A673 (cell line): ENCODE measurements at regions of chr1 and their contacts with region 1.

Region 1: GRCh38 chr1:21255278-21255942 is 34.9 kb downstream of the ECE1 start:
- DNase-seq: peak; percentile 90
- H3K4me3 ChIP-seq: no peak overlapping the region
- H3K27ac ChIP-seq: no peak overlapping the region
- H3K4me1 ChIP-seq: peaks cover 7% of the 10 kb centered on the region
- H3K27me3 ChIP-seq: no peaks in the 10 kb centered on the region
- CTCF ChIP-seq: peak; percentile 90

Region 2: DNA sequence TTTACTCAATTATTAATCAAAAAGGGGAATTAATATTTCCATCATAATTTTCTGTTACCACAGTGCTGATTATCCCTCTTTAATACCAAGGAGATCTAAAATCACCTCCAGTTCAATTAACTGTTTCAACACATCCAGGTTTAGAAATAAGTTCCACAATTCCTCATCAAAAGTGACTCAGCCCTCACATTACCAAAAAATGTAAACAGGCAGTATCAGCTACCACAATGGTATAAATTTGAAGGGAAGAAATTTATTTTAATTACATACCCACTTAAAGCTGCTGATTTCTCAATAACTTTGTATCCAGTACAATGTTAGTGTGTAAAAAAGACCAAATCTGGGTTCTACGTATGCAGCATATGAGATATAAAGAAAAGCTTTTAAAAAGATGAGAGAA is 130.6 kb before region 1 on chr1:
- CTCF ChIA-PET with region 1: no interaction called
- POLR2A ChIA-PET with region 1: no interaction called
- intact Hi-C with region 1: no loop called
- DNase-seq: no peak
- H3K4me3 ChIP-seq: no peak overlapping the region
- H3K27ac ChIP-seq: no peak overlapping the region
- H3K4me1 ChIP-seq: no peaks in the 10 kb centered on the region
- H3K27me3 ChIP-seq: no peaks in the 10 kb centered on the region
- CTCF ChIP-seq: no peak

Region 3: DNA sequence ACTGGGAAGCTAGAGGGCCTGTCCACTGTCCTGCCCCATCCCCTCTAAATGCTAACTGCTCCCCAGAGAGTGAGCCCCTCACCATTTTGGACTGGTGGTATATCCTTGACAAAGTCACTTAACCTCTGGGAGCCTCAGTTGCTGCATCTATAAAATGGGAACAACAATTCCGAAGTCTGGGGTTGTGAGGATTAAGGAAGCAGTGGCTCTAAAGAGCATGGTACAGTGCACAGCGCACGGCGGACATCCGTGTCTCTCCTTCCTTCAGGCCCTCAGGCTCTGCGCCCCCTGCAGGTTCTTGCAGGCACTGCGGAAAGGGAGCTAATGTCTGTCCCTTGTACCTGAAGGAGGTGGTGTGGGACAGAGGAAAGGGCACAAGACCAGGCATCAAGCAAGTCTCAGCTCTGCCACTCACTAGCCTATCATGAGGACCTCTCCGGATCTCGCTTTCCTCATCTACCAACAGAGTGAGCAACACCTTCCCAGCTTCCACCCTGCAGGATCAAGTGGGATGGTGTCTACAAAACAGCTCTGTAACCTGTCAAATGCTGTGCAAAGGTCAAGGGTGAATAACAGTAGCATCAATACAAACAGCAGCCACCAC is 14.8 kb after region 1 on chr1:
- CTCF ChIA-PET with region 1: interaction called, 22 read pairs
- POLR2A ChIA-PET with region 1: no interaction called
- intact Hi-C with region 1: no loop called
- DNase-seq: peak; percentile 75
- H3K4me3 ChIP-seq: no peak overlapping the region
- H3K27ac ChIP-seq: no peak overlapping the region
- H3K4me1 ChIP-seq: no peaks in the 10 kb centered on the region
- H3K27me3 ChIP-seq: no peaks in the 10 kb centered on the region
- CTCF ChIP-seq: peak; percentile 98

Region 4: DNA sequence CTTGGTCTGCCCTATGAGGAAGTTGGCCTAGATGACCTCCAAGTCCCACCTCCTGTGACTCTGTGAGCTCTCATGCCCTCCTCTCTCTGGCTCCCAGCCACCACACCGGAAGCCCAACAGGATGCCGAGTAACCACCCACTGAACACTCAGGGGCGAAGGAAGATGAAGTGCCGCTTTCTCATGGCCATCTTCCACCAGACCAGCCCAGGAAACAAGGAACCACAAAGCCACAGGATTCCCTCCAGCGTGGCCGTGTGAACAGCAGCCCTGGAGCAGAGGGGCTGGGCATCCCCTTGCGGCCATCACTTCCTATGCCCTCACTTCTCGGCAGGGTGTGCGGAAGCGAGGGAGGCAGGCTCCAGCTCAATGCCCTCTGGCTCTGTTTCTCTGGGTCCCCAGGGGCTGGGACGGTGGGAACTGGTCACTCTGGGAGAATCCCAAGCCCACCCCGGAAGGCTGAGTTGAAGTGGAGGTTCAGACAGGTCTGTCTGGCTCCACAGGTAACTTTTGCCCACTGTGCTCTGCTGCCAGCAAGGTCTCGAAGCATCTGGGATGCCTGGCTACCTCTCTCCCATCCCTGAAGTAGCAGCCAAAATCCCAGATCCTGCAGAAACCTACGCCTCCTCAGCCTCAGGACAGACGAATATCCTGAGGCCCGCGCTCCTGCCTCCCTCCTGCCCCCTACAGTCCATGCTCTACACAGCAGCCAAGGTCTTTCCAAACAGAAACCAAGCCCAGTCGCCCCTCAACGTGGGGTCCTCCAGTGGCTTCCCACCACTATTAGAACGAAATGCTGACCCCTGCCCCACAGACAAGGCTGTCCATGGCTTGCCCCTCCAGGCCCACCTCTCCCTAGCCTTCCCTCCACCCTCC is 79.0 kb after region 1 on chr1:
- CTCF ChIA-PET with region 1: interaction called, 11 read pairs
- POLR2A ChIA-PET with region 1: no interaction called
- intact Hi-C with region 1: loop called (anchors 1 kb)
- DNase-seq: peak; percentile 78
- H3K4me3 ChIP-seq: peak overlapping the region; percentile 50
- H3K27ac ChIP-seq: peak overlapping the region; percentile 70
- H3K4me1 ChIP-seq: peaks cover 35% of the 10 kb centered on the region
- H3K27me3 ChIP-seq: no peaks in the 10 kb centered on the region
- CTCF ChIP-seq: peak; percentile 87

Region 5: DNA sequence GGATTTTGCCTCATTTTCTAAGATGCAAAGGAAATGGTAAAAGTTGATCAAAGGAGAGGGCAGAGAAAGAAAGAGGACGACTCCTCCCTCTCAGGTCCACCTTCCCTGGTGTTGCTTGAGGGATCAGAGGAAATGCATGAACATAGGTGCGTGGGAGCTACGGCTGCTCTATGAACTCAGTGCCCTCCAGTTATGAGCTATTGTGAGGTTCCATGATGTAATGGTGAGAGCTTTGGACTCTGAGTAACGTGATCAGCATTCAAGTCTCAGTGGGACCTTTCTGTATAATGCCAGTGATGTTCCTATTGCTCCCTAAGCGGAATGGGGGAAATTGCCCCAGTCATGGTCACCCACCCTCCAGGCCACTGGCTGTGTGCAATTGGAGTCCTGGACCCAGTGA is 158.6 kb after region 1 on chr1:
- CTCF ChIA-PET with region 1: no interaction called
- POLR2A ChIA-PET with region 1: no interaction called
- intact Hi-C with region 1: no loop called
- DNase-seq: no peak
- H3K4me3 ChIP-seq: no peak overlapping the region
- H3K27ac ChIP-seq: no peak overlapping the region
- H3K4me1 ChIP-seq: no peaks in the 10 kb centered on the region
- H3K27me3 ChIP-seq: peaks cover 5% of the 10 kb centered on the region
- CTCF ChIP-seq: no peak

Region 6: DNA sequence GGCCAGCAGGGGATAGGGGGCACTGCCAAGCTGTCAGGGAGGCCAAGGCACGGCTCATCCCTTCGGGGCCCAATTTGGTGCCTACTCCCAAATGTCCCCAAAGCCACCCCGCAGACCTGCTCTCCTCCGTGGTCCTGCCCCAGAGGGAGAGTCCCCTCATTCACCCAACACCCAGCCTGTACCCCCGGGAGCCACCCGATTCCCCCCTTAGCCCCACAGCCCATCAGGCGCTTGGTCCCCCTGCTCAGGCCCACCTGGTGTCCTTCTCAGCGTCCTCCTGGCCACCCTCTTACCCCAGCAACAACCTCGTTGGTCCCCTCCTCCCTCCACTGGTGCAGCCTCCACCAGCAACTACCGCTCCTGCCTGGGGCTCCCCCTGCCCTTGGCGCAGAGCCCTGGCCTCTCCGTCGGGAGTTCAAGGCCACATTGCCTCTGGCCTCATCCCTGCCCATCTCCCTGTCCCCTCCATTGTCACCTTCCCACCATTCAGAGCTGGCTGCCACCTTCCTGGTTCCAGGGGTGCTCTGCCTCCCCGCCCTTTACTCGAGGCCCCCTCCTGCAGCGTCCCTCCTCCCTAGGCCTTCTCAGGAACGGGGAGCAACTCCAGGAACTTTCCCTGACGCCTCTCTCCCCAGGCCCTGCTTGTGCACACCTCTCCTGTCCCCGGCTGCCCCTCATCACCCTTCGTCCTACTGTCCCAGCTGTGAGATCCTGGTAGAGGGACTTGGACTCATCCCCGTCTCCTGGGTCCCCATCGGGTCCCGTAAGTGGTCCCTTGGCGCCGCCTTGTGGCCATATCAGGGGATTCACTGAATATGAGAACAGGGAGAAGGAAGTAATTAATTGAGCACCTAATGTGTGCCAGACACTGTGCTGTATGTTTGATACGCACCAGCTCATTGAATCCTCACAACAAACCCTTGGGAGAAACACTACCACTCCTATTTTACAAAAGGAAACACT is 339.8 kb after region 1 on chr1:
- CTCF ChIA-PET with region 1: no interaction called
- POLR2A ChIA-PET with region 1: no interaction called
- intact Hi-C with region 1: loop called (anchors 10 kb)
- DNase-seq: peak; percentile 89
- H3K4me3 ChIP-seq: no peak overlapping the region
- H3K27ac ChIP-seq: no peak overlapping the region
- H3K4me1 ChIP-seq: peaks cover 14% of the 10 kb centered on the region
- H3K27me3 ChIP-seq: no peaks in the 10 kb centered on the region
- CTCF ChIP-seq: peak; percentile 89

Region 7: DNA sequence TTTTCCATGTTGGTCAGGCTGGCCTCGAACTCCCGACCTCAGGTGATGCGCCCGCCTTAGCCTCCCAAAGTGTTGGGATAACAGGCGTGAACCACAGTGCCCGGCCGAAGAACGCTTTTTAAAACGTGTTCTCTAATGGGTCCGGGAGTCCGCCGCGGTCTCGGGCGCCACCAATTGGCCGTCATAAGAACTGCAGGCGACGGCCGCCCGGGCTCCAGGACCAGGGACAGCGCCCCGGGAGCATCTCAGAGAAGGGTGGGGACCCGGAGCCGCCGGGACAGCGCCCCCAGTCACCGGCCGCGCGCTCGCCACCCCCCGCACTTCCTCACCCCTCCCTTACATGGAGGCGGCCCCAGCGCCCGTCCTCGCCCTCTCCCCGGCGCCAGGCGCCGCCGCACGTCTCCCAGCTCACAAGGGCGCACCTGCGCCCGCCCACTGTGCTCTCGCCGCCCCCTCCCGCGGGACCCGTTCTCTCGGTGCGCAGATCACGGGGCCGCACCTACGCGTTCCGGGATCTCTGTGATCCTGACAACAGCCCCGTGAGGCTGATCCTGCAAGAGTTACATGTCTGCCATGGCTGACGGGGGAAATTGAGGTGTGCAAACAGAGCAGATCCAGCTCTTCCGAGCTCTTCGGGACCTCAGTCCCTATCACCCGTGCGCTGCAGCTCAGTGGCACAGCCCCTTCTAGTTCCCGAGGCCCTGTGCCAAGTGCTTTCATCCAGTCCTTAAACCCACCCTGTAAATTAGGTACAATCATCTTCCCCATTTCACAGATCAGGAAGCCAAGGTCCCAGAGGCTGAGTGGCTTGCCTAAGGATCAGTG is 403.9 kb after region 1 on chr1:
- CTCF ChIA-PET with region 1: no interaction called
- POLR2A ChIA-PET with region 1: no interaction called
- intact Hi-C with region 1: loop called (anchors 10 kb)
- DNase-seq: peak; percentile 75
- H3K4me3 ChIP-seq: peak overlapping the region; percentile 29
- H3K27ac ChIP-seq: no peak overlapping the region
- H3K4me1 ChIP-seq: peaks cover 19% of the 10 kb centered on the region
- H3K27me3 ChIP-seq: no peaks in the 10 kb centered on the region
- CTCF ChIP-seq: peak; percentile 88